Heart left ventricle (tissue), 16 donors: ENCODE measurements at regions of chr10 and their contacts with region 1.

Region 1: DNA sequence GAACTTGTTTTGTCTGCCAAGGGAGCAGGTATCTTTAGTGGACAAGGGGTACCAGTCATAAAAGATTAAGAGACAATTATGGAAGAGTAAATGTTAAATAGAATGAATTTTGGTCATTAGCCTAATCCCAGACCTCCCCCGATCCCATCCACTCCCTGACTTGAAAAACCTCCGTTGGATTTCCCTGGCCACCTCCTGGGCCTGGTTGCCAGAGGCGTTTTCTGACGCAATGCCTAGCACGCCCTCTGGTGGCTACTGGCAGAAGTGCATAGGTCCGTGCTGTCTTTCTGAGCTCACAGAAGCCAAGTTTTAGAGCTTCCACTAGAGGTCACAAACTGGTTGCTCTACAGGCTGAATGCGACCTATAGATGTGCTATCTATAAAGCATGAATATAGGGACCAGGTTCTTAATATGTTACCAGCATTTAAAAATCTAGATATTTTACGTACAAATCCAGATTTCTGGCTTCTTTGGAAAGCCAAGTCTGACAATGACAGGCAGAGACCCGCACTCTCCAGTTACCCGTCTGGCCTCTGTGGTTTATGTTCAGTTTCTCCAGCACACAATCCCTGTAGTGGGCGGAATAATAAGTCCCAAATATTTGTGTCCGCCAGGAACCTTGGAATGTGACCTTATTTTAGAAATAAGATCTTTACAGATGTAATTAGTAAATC is 39.8 kb downstream of the SPOCK2 start:
- DNase-seq: peak; percentile 89 to 93 (median 92)
- ATAC-seq: peak; percentile 34 to 83 (median 78)
- H3K4me3 ChIP-seq: no peak overlapping the region
- H3K27ac ChIP-seq: peak overlapping the region in 1 of 12 donors; percentile 11
- H3K4me1 ChIP-seq: peaks cover 0 to 17% (median 0%) of the 10 kb centered on the region in 12 donors
- H3K27me3 ChIP-seq: no peaks in the 10 kb centered on the region
- CTCF ChIP-seq: peak; percentile 99 to 100 (median 99)
- POLR2A ChIP-seq: no peak

Region 2: DNA sequence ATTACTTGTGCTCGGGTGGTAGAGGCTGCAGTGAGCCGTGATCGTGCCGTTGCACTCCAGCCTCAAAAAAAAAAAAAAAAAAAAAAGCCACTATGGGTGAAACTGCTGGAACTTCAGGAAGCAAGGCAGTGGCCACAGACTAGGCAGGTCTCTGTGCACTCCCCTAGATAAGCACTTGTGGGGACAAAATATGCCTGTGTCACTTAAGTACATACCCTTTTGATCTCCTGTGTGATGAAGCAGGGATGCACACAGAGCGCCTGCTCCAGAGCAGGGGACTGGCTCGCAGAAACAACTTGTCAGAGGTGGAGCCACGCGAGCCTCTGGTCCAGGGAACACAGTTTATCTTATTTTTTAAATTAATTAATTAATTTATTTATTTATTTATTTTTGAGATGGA is 154.7 kb before region 1 on chr10:
- intact Hi-C with region 1: loop called (anchors 1 to 5 kb)
- DNase-seq: no peak
- ATAC-seq: no peak
- H3K4me3 ChIP-seq: no peak overlapping the region
- H3K27ac ChIP-seq: no peak overlapping the region
- H3K4me1 ChIP-seq: peaks cover 0 to 54% (median 7%) of the 10 kb centered on the region in 12 donors
- H3K27me3 ChIP-seq: no peaks in the 10 kb centered on the region
- CTCF ChIP-seq: no peak
- POLR2A ChIP-seq: no peak

Region 3: GRCh38 chr10:71899665-71900412 is 148.7 kb before region 1 on chr10:
- intact Hi-C with region 1: loop called (anchors 1 to 5 kb)
- DNase-seq: peak in 1 of 5 donors; percentile 9
- ATAC-seq: no peak
- H3K4me3 ChIP-seq: no peak overlapping the region
- H3K27ac ChIP-seq: no peak overlapping the region
- H3K4me1 ChIP-seq: peaks cover 0 to 16% (median 0%) of the 10 kb centered on the region in 12 donors
- H3K27me3 ChIP-seq: no peaks in the 10 kb centered on the region
- CTCF ChIP-seq: no peak
- POLR2A ChIP-seq: no peak

Region 4: DNA sequence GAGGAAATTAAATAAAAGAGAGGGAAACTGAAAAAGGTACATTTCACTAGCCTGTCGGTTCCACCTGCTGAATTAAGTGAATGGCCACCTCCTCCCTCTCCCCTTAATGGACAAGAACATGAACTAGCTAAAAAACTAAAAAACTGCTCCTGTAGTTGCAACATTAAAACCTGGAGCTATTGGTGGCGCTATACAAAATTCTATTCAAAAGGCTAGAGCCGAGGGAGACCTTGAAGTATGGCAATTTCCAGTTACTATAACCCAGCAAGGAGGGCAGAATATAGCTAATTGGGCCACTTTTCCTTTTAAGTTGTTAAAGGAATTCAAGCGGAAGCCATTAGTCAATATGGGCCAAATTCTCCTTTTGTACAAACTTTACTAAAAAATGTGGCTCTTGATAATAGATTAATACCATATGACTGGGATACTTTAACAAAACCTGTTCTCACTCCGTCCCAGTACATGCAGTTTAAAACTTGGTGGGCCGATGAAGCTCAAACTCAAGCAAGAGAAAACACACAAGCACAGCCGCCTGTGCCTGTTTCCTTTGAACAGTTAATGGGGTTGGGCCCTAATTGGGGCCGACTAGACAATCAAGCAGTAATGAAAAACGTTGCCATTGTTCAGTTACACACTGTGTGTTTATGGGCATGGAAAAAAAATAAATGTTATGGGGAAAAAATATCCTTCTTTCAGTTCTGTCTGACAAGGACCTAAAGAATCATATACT is 90.9 kb before region 1 on chr10:
- intact Hi-C with region 1: loop called (anchors 1 to 5 kb)
- DNase-seq: no peak
- ATAC-seq: no peak
- H3K4me3 ChIP-seq: no peak overlapping the region
- H3K27ac ChIP-seq: no peak overlapping the region
- H3K4me1 ChIP-seq: peaks cover 0 to 12% (median 7%) of the 10 kb centered on the region in 12 donors
- H3K27me3 ChIP-seq: no peaks in the 10 kb centered on the region
- CTCF ChIP-seq: no peak
- POLR2A ChIP-seq: no peak

Region 5: DNA sequence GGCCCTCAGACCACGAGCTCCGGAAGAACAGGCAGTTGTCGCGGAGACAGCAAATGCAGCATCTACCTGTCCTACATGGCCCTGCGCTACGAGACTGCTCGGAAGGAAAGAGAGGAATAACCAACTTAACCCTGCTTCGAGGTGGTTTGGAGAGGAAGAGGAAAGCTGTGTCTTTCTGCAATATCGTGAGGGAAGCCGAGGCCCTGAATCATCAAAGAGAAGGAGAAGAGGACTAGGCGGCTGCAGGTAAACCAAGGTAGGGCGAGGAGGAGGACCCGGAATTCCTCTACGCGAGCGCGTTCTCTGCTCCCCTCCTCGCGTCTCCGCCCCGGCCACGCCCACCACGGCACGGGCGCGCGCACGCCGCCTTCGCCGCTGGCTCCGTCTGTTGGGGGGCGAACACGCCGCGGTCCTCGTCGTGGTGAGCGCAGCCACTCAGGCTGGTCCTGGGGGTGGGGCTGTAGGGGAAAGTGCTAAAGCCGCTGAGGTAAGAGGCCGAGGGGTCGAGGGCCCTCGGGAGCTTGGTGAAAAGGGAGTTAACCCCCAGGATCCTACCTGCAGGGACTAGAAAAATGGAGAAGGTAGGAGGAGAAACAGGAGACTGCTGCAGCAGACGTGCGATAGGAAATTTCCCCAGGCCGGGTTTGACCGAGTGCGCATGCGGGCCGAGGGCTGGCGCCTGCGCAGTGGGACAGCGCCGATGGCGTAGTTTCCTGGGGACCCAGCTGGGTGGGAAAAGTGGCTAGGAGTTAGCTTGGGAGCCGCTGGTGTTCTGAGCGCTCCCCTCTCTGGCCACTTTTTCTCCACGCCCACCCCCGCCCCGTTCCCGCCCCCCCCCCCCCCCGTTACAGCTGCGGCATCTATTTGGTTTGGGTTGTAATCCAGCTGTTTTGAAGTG is 167.3 kb after region 1 on chr10 and contains the starts of genes ANAPC16 and ASCC1:
- intact Hi-C with region 1: loop called in 8 of 10 experiments (anchors 5 to 10 kb)
- DNase-seq: peak; percentile 91 to 96 (median 93)
- ATAC-seq: peak; percentile 92 to 99 (median 98)
- H3K4me3 ChIP-seq: peak within 1 kb of the TSS; percentile 62 to 91 (median 72)
- H3K27ac ChIP-seq: peak within 1 kb of the TSS; percentile 91 to 100 (median 98)
- H3K4me1 ChIP-seq: peaks cover 9 to 54% (median 38%) of the 10 kb centered on the region in 12 donors
- H3K27me3 ChIP-seq: no peaks in the 10 kb centered on the region
- CTCF ChIP-seq: peak in 1 of 12 donors; percentile 5
- POLR2A ChIP-seq: peak; percentile 41 to 92
- total RNA-seq, gene ANAPC16: 135 to 237 (median 179) TPM
- total RNA-seq, gene ASCC1: 26.4 to 44.8 (median 35.3) TPM

Region 6: GRCh38 chr10:72223743-72224101 is 175.1 kb after region 1 on chr10:
- intact Hi-C with region 1: loop called in 9 of 10 experiments (anchors 2 to 10 kb)
- DNase-seq: no peak
- ATAC-seq: peak; percentile 13 to 61 (median 32)
- H3K4me3 ChIP-seq: no peak overlapping the region
- H3K27ac ChIP-seq: peak overlapping the region in 11 of 12 donors; percentile 14 to 78 (median 58)
- H3K4me1 ChIP-seq: peaks cover 0 to 57% (median 21%) of the 10 kb centered on the region in 12 donors
- H3K27me3 ChIP-seq: no peaks in the 10 kb centered on the region
- CTCF ChIP-seq: no peak
- POLR2A ChIP-seq: no peak

Region 7: GRCh38 chr10:72248468-72249151 is 200.0 kb after region 1 on chr10:
- intact Hi-C with region 1: no loop called
- DNase-seq: peak; percentile 88 to 91 (median 88)
- ATAC-seq: peak; percentile 87 to 93 (median 90)
- H3K4me3 ChIP-seq: peak overlapping the region in 9 of 12 donors; percentile 6 to 39 (median 16)
- H3K27ac ChIP-seq: peak overlapping the region; percentile 81 to 96 (median 92)
- H3K4me1 ChIP-seq: peaks cover 28 to 100% (median 87%) of the 10 kb centered on the region in 12 donors
- H3K27me3 ChIP-seq: no peaks in the 10 kb centered on the region
- CTCF ChIP-seq: no peak
- POLR2A ChIP-seq: peak in 1 of 2 donors; percentile 23

Region 8: DNA sequence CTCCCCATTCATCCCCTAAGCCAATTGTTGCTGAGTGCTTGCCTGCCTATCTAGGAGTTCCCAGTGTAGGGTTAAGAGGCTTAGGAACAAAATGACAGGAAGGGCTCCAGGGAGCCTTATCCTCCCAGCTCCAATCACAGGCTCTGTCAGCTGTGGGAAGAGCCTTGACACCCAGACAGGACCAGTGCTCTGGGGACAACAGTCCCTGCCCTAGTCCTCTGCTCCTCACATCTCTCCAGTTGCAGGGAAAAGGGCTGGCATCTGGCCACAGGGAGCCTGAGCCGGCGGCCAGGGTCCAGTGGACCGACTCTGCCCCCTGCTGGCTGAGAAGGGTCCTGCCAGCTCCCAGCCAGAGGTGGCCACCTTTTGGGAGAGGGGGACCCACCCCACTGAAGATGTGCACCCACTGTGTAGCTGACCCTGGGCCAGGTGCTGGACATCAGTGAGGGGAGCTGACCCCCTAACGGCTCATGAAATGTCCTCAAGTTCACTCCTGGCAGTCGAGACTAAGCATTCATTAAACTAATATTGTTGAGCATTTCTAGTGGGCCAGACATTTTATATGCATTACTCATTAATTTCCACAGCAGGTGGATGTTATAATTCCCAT is 288.5 kb after region 1 on chr10:
- intact Hi-C with region 1: loop called in 7 of 10 experiments (anchors 2 to 5 kb)
- DNase-seq: peak; percentile 87 to 94 (median 92)
- ATAC-seq: peak; percentile 16 to 44 (median 39)
- H3K4me3 ChIP-seq: no peak overlapping the region
- H3K27ac ChIP-seq: peak overlapping the region; percentile 82 to 98 (median 92)
- H3K4me1 ChIP-seq: peaks cover 8 to 63% (median 53%) of the 10 kb centered on the region in 12 donors
- H3K27me3 ChIP-seq: no peaks in the 10 kb centered on the region
- CTCF ChIP-seq: peak; percentile 93 to 99 (median 98)
- POLR2A ChIP-seq: no peak